Sigmoid colon (tissue), 7 donors: ENCODE measurements at regions of chr22 and their contacts with region 1.

Region 1: DNA sequence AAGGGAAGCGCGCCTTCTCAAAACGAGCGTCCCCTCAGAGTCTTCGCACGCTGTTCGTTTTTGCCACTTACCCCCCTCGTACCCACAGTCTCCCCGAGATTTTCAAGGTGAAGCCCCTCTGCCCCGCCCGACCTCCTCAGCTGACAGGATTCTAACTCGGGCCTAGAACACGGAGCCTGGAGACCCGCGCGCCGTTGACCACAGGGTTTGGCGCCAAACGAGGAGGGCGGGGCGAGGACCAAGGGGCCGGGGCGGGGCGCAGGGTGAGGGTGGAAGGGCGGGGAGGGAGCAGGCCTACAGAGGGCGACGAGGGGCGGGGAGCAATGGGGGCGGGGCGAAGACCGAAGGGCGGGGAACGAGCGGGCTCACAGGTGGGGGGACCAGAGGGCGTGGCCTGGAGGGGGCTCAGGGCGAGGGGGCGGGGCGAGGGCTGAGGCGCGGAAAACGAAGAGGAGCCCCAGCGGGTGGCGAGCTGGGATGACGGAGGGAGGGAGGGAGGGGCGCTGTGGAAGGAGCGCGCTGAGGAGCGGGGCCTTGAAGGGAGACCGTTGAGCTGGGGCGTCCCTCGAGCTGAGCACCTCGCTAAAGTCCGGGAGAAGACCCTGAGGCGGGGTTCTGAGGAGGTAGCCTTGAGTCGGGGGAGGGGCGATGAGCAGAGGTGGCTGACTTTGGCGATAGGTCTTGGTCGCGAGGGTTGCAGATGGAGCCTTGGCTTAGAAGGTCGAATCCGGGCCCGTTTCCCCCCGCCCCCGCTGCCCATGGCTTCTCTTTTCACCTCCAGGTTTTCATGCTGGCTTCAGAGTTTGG is at the start of gene DMC1:
- DNase-seq: peak; percentile 98
- H3K4me3 ChIP-seq: peak within 1 kb of the TSS; percentile 56 to 75 (median 68)
- H3K27ac ChIP-seq: peak within 1 kb of the TSS; percentile 85 to 90 (median 88)
- H3K4me1 ChIP-seq: peaks cover 0 to 18% (median 12%) of the 10 kb centered on the region in 4 donors
- H3K27me3 ChIP-seq: no peaks in the 10 kb centered on the region
- CTCF ChIP-seq: no peak
- EP300 ChIP-seq: no peak
- POLR2A ChIP-seq: peak in 1 of 2 donors; percentile 16
- total RNA-seq, gene DMC1: 0.68 to 43.3 (median 3.8) TPM

Region 2: DNA sequence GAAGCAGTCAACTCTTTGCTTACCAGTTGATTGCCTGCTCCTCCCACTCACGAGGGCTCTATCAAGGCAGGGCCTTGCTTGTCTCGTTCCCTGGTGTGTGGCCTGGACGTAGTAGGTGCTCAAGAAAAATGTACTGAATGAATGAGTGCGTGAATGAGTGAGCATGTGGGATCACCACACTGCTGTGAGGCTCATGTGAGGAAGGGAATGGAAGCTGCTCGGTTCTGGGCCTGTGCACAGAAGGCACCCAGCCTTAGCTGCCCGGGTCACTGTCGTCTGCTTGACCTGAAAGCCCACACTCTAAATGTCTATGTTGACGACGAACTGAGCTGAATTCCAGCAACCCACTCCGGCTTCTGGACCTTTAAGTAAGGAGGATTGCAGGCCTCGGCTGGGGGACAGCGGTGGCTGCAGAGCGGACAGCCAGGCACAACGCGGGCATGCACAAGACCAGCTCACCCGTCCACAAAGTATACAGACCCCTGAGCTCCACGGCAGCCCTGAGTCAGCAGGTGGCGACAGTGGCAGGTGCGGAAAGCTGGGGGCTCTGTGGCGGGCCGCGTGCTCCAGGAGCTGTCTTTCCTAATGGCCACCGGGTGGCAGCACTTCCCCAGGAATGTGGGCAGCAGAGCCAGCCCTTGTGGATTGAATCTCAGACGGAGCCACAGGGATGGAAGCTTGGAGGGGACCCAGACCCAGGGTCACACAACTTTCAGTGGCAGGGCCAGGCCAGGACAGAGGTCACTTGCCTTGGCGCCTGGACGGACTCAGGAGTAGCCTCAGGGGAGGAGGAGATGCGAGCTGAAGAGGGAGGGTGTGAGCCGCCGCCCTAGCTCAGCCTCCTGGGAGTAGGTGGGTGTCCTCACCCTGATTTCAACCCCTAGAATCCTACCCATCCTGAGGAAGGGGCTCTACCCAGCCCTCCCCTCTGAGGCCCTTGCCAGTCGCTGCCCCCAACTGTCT is 518.0 kb before region 1 on chr22:
- intact Hi-C with region 1: loop called (anchors 2 kb)
- DNase-seq: peak; percentile 89
- H3K4me3 ChIP-seq: no peak overlapping the region
- H3K27ac ChIP-seq: peak overlapping the region in 2 of 4 donors; percentile 22 to 29
- H3K4me1 ChIP-seq: peaks cover 0 to 16% (median 6%) of the 10 kb centered on the region in 4 donors
- H3K27me3 ChIP-seq: no peaks in the 10 kb centered on the region
- CTCF ChIP-seq: peak; percentile 84 to 91 (median 86)
- EP300 ChIP-seq: no peak
- POLR2A ChIP-seq: no peak

Region 3: DNA sequence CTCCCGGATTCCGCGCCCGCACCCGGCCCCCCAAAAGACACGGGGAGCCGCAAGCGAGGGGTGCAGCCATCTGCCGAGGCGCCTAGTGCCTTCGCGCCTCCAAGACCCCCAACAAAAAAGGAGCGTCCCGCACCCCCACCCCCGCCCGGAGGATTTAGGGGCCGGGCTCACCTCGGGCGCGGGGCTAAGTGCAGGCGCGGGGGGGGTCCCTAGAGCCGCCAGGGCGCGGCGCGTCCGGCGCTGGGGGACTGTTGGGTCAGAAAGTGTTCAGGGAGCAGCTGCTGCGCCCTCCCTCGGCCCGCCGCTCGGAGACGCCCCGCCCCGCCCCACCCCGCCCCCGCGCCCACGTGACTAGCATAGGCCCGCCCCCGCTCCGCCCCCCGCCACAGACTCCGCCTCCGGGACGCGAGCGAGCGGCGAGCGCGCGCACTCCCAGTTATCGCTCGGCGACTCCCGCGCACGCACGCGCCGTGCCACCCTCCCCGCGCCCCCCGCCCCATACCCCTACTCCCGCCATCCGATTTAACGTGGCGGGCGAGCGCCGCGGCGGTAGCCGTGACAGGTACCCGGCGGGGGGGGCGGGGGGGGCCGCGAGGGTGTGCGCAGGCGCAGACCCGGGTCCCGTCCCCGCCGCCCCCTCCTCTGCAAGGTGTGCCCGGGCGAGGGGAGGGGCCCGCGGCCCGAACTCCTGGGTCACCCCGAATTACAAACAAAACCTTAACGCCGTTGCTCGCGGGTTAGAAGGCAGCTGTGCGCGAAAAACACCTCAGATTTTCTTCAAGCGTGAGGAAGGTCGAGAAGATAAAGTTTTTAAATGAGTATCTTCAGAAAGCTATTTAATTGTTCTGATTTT is 171.3 kb before region 1 on chr22:
- intact Hi-C with region 1: loop called (anchors 5 kb)
- DNase-seq: peak; percentile 91
- H3K4me3 ChIP-seq: peak overlapping the region; percentile 59 to 95 (median 83)
- H3K27ac ChIP-seq: peak overlapping the region; percentile 91 to 96 (median 92)
- H3K4me1 ChIP-seq: peaks cover 0 to 25% (median 16%) of the 10 kb centered on the region in 4 donors
- H3K27me3 ChIP-seq: no peaks in the 10 kb centered on the region
- CTCF ChIP-seq: no peak
- EP300 ChIP-seq: no peak
- POLR2A ChIP-seq: peak; percentile 74 to 76

Region 4: DNA sequence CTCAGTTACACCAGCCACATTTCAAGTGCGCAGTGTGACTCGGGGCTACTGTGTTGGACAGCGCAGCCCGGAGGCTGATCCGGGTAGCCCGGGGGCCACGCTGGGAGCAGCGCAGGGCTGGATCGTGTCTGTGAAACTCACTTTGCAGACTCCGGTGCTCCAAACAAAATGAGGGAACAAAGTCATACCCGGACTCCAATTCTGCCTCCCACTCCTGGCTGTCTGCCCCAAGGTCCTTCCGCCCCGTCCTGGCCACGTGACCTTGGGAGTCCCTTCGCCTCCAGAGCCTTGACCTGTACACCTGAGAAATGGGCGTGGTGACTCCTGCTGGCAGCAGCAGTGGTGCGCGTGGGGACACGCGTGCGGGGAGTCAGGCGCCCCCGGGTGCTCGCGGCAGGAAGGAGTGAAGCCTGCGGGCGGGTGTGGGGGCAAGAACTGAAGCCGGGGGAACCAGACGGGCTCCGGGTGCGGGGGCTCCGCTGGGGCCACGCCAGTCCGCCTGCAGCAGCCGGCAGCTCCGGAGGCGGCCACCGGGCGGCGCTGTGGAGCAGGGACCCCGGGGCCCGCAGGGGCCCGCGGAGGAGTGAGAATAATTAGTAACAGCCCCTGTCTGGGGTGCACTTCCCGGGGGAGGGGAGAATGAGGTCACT is 157.6 kb before region 1 on chr22:
- intact Hi-C with region 1: loop called (anchors 5 kb)
- DNase-seq: peak; percentile 61
- H3K4me3 ChIP-seq: peak overlapping the region in 3 of 4 donors; percentile 16 to 35 (median 34)
- H3K27ac ChIP-seq: no peak overlapping the region
- H3K4me1 ChIP-seq: peaks cover 0 to 13% (median 11%) of the 10 kb centered on the region in 4 donors
- H3K27me3 ChIP-seq: no peaks in the 10 kb centered on the region
- CTCF ChIP-seq: peak; percentile 22 to 82 (median 50)
- EP300 ChIP-seq: no peak
- POLR2A ChIP-seq: no peak

Region 5: DNA sequence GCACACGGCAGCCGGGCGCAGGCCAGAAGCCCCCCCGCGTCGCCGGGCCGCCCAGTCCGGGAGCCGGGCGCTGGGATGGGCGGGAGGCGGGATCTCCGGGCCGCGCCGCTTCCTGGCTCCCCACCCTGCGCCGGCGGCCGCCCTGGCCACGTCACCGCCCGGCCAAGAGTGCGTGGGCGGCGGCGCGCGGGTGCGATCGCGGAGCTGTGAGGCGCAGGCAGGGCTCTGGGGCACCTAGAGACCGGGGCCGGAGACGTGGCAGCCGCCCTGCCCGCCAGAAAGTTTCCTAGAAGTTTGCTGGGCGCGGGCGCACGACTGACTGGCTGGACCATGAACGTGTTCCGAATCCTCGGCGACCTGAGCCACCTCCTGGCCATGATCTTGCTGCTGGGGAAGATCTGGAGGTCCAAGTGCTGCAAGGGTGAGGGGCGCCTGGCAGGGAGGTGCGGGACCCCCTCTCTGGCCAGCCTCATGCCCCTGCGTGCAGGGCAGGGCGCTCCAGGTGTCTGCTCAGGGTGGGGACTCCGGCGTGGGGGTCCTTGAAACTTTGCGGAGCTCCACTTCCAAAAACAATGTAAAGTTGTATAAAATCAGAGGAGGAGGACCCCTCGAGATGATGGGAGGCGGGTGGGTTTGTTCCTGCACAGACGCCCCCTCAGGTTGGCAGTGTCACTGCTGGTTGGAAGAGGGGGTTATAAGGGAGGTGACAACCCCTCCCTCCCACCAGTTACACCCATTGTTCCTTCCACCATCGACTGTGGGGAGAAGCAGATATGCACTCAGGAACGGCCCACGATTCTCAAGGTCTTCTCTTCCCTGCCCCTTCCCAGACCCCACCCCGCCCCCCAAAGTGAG is 102.0 kb before region 1 on chr22 and contains the start of gene KDELR3:
- intact Hi-C with region 1: loop called (anchors 5 kb)
- DNase-seq: peak; percentile 80
- H3K4me3 ChIP-seq: peak within 1 kb of the TSS; percentile 28 to 59 (median 56)
- H3K27ac ChIP-seq: peak within 1 kb of the TSS in 3 of 4 donors; percentile 8 to 58 (median 50)
- H3K4me1 ChIP-seq: peaks cover 0 to 19% (median 16%) of the 10 kb centered on the region in 4 donors
- H3K27me3 ChIP-seq: peaks cover 0 to 9% (median 3%) of the 10 kb centered on the region in 3 donors
- CTCF ChIP-seq: no peak
- EP300 ChIP-seq: no peak
- POLR2A ChIP-seq: no peak
- total RNA-seq, gene KDELR3: 2.5 to 5.5 (median 2.9) TPM

Region 6: GRCh38 chr22:38506118-38506962 is 63.8 kb before region 1 on chr22 and contains the start of gene DDX17:
- intact Hi-C with region 1: loop called (anchors 1 kb)
- DNase-seq: peak; percentile 98
- H3K4me3 ChIP-seq: peak within 1 kb of the TSS; percentile 73 to 94 (median 90)
- H3K27ac ChIP-seq: peak within 1 kb of the TSS; percentile 98 to 100 (median 99)
- H3K4me1 ChIP-seq: peaks cover 0 to 46% (median 45%) of the 10 kb centered on the region in 4 donors
- H3K27me3 ChIP-seq: no peaks in the 10 kb centered on the region
- CTCF ChIP-seq: peak in 1 of 4 experiments; percentile 10
- EP300 ChIP-seq: no peak
- POLR2A ChIP-seq: peak; percentile 41 to 64
- total RNA-seq, gene DDX17: 504 to 630 (median 591) TPM